ENCODE measurements at regions of chr1 and their contacts with region 1.

Region 1: DNA sequence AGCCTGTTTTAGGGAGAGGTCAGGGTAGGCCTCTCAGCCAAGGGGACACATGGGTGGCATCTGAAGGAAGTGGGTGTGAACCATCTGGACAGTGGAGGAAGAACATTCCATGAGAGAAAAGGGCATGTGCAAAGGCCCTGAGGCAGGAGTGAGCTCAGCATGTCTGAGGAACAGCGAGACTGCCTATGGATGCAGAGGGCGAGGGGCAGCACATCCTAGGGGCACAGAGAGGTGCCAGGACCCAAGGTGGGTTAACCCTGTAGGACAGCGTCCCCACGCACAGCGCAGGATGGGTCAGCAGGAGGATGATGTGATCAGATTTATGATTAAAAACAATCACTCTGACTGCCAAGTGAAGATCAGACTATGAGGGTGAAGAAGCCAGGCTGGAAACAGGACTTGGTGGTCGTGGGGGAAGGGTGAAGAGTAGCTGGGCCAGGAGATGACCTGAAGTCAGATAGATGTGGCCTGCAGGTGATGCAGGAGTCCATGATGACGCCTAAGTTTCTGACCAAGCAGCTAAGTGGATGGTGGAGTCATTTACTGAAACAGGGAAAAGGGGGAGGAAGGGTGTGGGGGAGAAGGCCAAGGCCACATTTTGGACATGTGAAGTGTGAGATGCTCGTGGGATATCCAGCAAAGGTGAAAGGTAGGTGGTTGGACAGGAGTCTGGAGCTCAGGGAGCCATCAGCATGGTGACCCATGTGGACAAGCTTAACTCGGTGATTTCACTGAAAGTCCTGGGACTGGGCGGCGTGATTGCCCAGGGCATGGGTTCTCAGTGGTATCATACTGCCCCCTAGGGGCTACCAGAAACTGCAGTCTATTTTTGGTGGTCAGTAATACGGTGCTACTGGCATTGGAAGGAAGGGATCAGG is 37.8 kb downstream of the PABPC4 start:
- DNase-seq: peak; percentile 52
- ATAC-seq: peak; percentile 97
- H3K4me3 ChIP-seq: no peak overlapping the region
- H3K27ac ChIP-seq: no peak overlapping the region
- H3K4me1 ChIP-seq: no peaks in the 10 kb centered on the region
- H3K27me3 ChIP-seq: no peaks in the 10 kb centered on the region
- CTCF ChIP-seq: peak; percentile 93

Region 2: GRCh38 chr1:39491146-39491921 is 47.5 kb before region 1 on chr1 and contains the start of gene BMP8A:
- CTCF ChIA-PET with region 1: interaction called, 5 read pairs
- POLR2A ChIA-PET with region 1: no interaction called
- in situ Hi-C with region 1: no loop called
- intact Hi-C with region 1: loop called (anchors 5 kb)
- DNase-seq: no peak
- ATAC-seq: peak; percentile 86
- H3K4me3 ChIP-seq: peak within 1 kb of the TSS; percentile 47 to 50
- H3K27ac ChIP-seq: no peak within 1 kb of the TSS
- H3K4me1 ChIP-seq: peaks cover 5% of the 10 kb centered on the region
- H3K27me3 ChIP-seq: no peaks in the 10 kb centered on the region
- CTCF ChIP-seq: no peak
- total RNA-seq, gene BMP8A: 0.54 TPM

Region 3: DNA sequence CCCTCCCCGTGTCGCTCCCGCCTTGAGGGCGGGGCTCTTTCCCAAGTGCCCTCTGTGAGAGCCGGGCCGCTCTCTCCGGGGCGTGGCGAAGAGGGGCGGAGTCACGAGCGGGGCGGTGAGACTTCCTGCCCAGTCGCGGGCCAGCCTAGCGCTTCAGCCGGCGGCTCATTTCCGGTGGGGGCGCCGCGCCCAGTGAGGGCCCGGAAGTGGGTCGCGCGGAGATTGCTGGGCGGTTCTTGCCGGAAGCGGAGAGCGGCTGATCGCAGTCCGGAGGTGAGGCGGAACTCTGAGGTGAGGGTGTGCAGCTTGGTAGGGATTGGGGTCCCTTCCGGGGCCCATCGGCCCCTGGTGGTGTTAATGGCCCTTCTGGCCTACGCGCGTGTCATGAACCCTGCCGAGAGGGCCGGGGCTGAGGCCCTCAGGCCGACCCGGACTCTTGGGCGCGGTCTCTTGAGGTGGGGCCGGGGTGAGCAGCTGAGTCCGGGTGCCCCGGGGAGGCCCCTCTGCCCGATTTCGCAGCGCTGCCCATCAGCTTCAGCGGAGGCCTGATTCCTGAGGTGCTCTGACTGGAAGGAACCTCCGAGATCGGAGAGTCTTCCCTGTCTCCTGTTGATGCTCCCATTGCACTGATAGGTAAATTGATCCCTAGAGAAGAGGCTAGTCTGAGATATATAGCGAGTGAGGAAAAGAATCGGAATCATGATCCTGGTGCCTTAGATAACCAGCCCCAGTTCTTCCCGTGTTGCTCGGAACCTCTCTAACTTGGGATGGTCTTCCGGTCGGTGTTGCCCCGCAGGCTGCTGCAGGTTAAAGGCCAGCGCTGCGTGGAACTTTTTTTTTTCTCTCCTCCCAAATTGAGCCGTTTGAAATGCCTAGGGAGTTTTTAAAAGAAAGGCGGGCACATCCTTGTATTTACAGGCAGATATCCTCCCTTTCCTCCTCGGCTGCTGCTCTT is 502.0 kb after region 1 on chr1 and contains the start of gene CAP1:
- CTCF ChIA-PET with region 1: no interaction called
- POLR2A ChIA-PET with region 1: no interaction called
- in situ Hi-C with region 1: no loop called
- intact Hi-C with region 1: no loop called
- DNase-seq: peak; percentile 89
- ATAC-seq: peak; percentile 97
- H3K4me3 ChIP-seq: peak within 1 kb of the TSS; percentile 96 to 100
- H3K27ac ChIP-seq: peak within 1 kb of the TSS; percentile 98
- H3K4me1 ChIP-seq: peaks cover 20% of the 10 kb centered on the region
- H3K27me3 ChIP-seq: no peaks in the 10 kb centered on the region
- CTCF ChIP-seq: no peak
- total RNA-seq, gene CAP1: 463 TPM

Measured in Panc1 (cell line).